Calu3 (cell line): ENCODE measurements at regions of chr20 and their contacts with region 1.

Region 1: DNA sequence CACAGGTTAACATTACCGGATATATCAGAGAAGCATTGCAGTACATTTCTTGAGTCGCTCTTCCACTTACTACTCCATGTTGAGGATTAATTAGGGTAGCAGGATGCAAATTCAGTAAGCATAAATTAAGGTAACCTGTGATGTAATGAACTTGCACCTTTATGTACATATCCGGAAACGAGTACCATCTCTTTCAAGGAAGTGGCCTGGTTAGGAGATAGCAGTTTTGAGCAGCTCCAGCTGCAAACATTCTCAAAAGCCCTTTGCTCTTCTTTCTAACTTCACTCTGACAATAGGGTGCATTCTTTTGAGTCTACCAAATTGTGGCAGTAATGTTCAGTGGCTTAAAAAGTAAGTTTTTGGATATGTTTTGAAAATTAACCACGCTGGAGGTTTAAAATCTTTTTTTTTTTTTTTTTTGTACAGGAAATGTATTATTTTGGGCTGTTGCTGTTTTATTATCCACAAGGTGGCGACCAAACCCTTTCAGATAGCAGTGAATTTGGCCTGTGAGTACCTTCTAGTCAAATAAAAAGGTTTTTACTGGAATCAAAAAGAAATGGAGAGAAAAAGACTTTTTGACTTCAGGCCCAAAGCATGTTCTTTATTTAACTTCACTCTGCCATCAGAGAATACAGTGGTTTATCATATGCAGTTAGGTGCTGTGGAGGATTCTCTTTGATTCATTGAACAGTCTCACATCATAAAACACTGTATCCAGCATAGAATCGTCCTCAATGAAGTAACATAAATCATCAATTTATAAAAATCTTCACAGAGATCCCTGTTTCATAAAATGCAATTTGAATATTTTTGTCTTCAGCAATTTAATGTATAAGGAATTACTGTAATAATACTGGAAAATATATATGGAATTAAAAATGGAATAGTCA is 8.9 kb downstream of the FAM217B start:
- DNase-seq: peak; percentile 48
- H3K4me3 Mint-ChIP-seq: no peak overlapping the region
- H3K27ac Mint-ChIP-seq: no peak overlapping the region
- H3K4me1 Mint-ChIP-seq: peaks cover 14% of the 10 kb centered on the region
- H3K27me3 Mint-ChIP-seq: no peaks in the 10 kb centered on the region
- CTCF ChIP-seq: peak; percentile 57

Region 2: DNA sequence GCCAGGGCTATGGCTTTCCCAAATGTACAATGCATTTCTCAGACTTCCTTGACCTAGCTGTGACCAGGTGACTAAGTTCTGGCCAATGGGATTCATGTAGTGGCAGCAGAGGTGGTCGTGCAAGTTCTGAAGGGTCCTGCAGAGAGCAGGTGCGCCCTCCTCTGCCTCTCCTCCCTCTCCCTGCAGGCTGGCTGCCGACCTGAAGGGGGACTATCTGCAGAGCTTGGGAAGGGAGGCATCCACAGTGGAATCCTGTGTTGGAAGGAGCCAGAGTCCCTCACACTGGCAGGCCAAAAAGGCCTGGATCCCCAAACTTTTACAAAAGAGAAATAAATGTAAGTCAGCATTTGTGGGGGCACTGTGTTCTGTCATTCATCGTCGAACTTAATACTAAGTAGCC is 75.7 kb after region 1 on chr20:
- CTCF ChIA-PET with region 1: no interaction called
- intact Hi-C with region 1: no loop called
- DNase-seq: no peak
- H3K4me3 Mint-ChIP-seq: no peak overlapping the region
- H3K27ac Mint-ChIP-seq: no peak overlapping the region
- H3K4me1 Mint-ChIP-seq: no peaks in the 10 kb centered on the region
- H3K27me3 Mint-ChIP-seq: no peaks in the 10 kb centered on the region
- CTCF ChIP-seq: no peak

Region 3: GRCh38 chr20:60050158-60050947 is 101.3 kb after region 1 on chr20:
- CTCF ChIA-PET with region 1: interaction called, 8 read pairs
- intact Hi-C with region 1: loop called (anchors 1 kb)
- DNase-seq: peak; percentile 83
- H3K4me3 Mint-ChIP-seq: no peak overlapping the region
- H3K27ac Mint-ChIP-seq: no peak overlapping the region
- H3K4me1 Mint-ChIP-seq: peaks cover 21% of the 10 kb centered on the region
- H3K27me3 Mint-ChIP-seq: peaks cover 38% of the 10 kb centered on the region
- CTCF ChIP-seq: peak; percentile 79